HAP-1 (cell line): ENCODE measurements at regions of chr2 and their contacts with region 1.

Region 1: GRCh38 chr2:105114551-105114950 is 76.7 kb downstream of the MRPS9 start:
- DNase-seq: peak in 1 of 2 experiments; percentile 65
- H3K4me3 ChIP-seq: no peak overlapping the region
- H3K4me1 ChIP-seq: no peaks in the 10 kb centered on the region
- H3K27me3 ChIP-seq: no peaks in the 10 kb centered on the region

Region 2: DNA sequence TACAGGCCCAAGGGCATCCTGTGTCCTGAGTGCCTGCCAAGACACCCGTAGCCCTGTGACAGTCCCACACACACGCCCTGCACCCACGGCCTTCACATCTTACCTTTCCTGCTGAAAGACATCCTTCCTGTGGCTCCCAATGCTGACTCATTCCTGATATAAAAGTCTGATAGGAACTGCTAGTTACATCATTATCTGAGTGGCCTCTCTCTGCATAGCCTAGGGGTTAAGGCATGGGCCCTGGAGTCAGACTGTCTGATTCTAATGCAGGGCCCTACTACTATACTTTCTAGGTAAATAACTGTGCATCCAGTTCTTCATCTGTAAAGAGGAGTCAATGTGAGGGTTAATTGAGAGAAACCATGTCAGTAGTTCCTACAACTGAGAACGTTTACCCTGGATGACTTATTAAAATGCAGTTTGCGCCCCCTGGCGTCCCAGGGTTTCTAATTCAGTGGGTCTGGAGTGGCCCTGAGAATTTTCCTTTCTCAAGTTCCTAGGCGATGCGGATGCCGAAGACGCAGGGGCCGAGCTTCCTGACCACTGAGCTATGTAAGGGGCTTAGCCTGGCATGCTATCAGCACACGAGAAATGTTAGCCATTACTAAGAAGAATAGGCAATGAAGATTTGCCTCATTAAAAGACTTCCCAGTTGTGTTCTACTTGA is 121.0 kb after region 1 on chr2:
- in situ Hi-C with region 1: loop called (anchors 5 kb)
- DNase-seq: peak; percentile 71 to 91
- H3K4me3 ChIP-seq: no peak overlapping the region
- H3K4me1 ChIP-seq: no peaks in the 10 kb centered on the region
- H3K27me3 ChIP-seq: no peaks in the 10 kb centered on the region

Region 3: GRCh38 chr2:105545730-105546627 is 431.4 kb after region 1 on chr2:
- in situ Hi-C with region 1: loop called (anchors 25 kb)
- DNase-seq: peak; percentile 27 to 87
- H3K4me3 ChIP-seq: no peak overlapping the region
- H3K4me1 ChIP-seq: no peaks in the 10 kb centered on the region
- H3K27me3 ChIP-seq: no peaks in the 10 kb centered on the region